Naive thymus-derived CD4-positive, alpha-beta T cell (primary cell): ENCODE measurements at regions of chr13 and their contacts with region 1.

Region 1: GRCh38 chr13:45417790-45418534 is at the start of gene SLC25A30:
- DNase-seq: peak; percentile 73 to 90 (median 87)
- ATAC-seq: peak; percentile 97
- H3K4me3 ChIP-seq: peak within 1 kb of the TSS; percentile 97
- H3K4me3 Mint-ChIP-seq: peak within 1 kb of the TSS; percentile 90 to 98 (median 96)
- H3K27ac ChIP-seq: peak within 1 kb of the TSS; percentile 79
- H3K27ac Mint-ChIP-seq: peak within 1 kb of the TSS; percentile 92 to 99 (median 96)
- H3K4me1 ChIP-seq: peaks cover 4 to 21% of the 10 kb centered on the region in 2 donors
- H3K4me1 Mint-ChIP-seq: peaks cover 0 to 36% (median 27%) of the 10 kb centered on the region in 7 donors
- H3K27me3 ChIP-seq: no peaks in the 10 kb centered on the region
- H3K27me3 Mint-ChIP-seq: no peaks in the 10 kb centered on the region
- total RNA-seq, gene SLC25A30: 13.3 to 29.4 (median 23.6) TPM

Region 2: GRCh38 chr13:45119991-45120864 is 297.7 kb before region 1 on chr13 and contains the start of gene GTF2F2:
- CTCF ChIA-PET with region 1: no interaction called
- POLR2A ChIA-PET with region 1: interaction called, 3 read pairs
- intact Hi-C with region 1: loop called in 1 of 2 experiments (anchors 1 kb)
- DNase-seq: peak; percentile 81 to 89 (median 86)
- ATAC-seq: peak; percentile 80
- H3K4me3 ChIP-seq: peak within 1 kb of the TSS; percentile 80
- H3K4me3 Mint-ChIP-seq: no peak within 1 kb of the TSS
- H3K27ac ChIP-seq: peak within 1 kb of the TSS; percentile 91
- H3K27ac Mint-ChIP-seq: no peak within 1 kb of the TSS
- H3K4me1 ChIP-seq: peaks cover 16 to 21% of the 10 kb centered on the region in 2 donors
- H3K4me1 Mint-ChIP-seq: peaks cover 6 to 17% (median 13%) of the 10 kb centered on the region in 7 donors
- H3K27me3 ChIP-seq: no peaks in the 10 kb centered on the region
- H3K27me3 Mint-ChIP-seq: no peaks in the 10 kb centered on the region
- total RNA-seq, gene GTF2F2: 13.7 to 20.4 (median 15.2) TPM

Region 3: GRCh38 chr13:45393941-45394570 is 23.9 kb before region 1 on chr13:
- CTCF ChIA-PET with region 1: interaction called, 9 read pairs
- POLR2A ChIA-PET with region 1: interaction called, 40 read pairs
- intact Hi-C with region 1: loop called (anchors 1 kb)
- DNase-seq: peak in 1 of 9 donors; percentile 33
- ATAC-seq: peak; percentile 52
- H3K4me3 ChIP-seq: no peak overlapping the region
- H3K4me3 Mint-ChIP-seq: no peak overlapping the region
- H3K27ac ChIP-seq: no peak overlapping the region
- H3K27ac Mint-ChIP-seq: peak overlapping the region in 8 of 9 donors; percentile 16 to 95 (median 72)
- H3K4me1 ChIP-seq: peaks cover 10 to 20% of the 10 kb centered on the region in 2 donors
- H3K4me1 Mint-ChIP-seq: peaks cover 30 to 49% (median 48%) of the 10 kb centered on the region in 7 donors
- H3K27me3 ChIP-seq: no peaks in the 10 kb centered on the region
- H3K27me3 Mint-ChIP-seq: no peaks in the 10 kb centered on the region

Region 4: GRCh38 chr13:45406421-45406820 is 11.5 kb before region 1 on chr13:
- CTCF ChIA-PET with region 1: no interaction called
- POLR2A ChIA-PET with region 1: interaction called, 20 read pairs
- intact Hi-C with region 1: loop called in 1 of 2 experiments (anchors 1 kb)
- DNase-seq: no peak
- ATAC-seq: no peak
- H3K4me3 ChIP-seq: no peak overlapping the region
- H3K4me3 Mint-ChIP-seq: no peak overlapping the region
- H3K27ac ChIP-seq: no peak overlapping the region
- H3K27ac Mint-ChIP-seq: peak overlapping the region in 6 of 9 donors; percentile 32 to 77 (median 54)
- H3K4me1 ChIP-seq: no peaks in the 10 kb centered on the region
- H3K4me1 Mint-ChIP-seq: peaks cover 6 to 21% (median 12%) of the 10 kb centered on the region in 7 donors
- H3K27me3 ChIP-seq: no peaks in the 10 kb centered on the region
- H3K27me3 Mint-ChIP-seq: no peaks in the 10 kb centered on the region